ENCODE measurements at regions of chr12 and their contacts with region 1.

Region 1: DNA sequence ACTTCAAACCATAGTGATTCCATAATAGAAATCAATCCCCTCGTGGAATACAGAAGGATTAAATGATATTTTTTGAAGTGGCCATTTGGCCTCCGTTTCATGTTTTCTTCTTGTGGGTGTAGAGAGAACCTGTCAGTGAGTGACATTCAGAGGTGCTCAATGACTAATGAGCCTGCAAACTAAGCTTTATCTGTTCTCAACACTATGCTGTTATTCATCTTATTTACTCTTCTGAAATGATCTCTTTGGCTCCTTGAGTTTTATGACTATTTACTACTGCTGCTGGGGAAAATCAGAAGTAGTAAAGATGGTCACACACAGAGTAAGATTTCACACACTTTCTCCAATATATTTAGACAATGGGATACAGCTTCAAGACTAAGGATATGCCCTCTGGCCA is 30.4 kb downstream of the ATP2B1 start:
- DNase-seq: no peak
- H3K4me3 ChIP-seq: no peak overlapping the region
- H3K4me3 Mint-ChIP-seq: peak overlapping the region in 6 of 8 donors; percentile 3 to 49 (median 22)
- H3K27ac ChIP-seq: no peak overlapping the region
- H3K27ac Mint-ChIP-seq: peak overlapping the region in 5 of 7 donors; percentile 1 to 50 (median 13)
- H3K4me1 ChIP-seq: peaks cover 67% of the 10 kb centered on the region
- H3K4me1 Mint-ChIP-seq: peaks cover 52 to 81% (median 68%) of the 10 kb centered on the region in 4 donors
- H3K27me3 ChIP-seq: no peaks in the 10 kb centered on the region
- H3K27me3 Mint-ChIP-seq: no peaks in the 10 kb centered on the region

Region 2: DNA sequence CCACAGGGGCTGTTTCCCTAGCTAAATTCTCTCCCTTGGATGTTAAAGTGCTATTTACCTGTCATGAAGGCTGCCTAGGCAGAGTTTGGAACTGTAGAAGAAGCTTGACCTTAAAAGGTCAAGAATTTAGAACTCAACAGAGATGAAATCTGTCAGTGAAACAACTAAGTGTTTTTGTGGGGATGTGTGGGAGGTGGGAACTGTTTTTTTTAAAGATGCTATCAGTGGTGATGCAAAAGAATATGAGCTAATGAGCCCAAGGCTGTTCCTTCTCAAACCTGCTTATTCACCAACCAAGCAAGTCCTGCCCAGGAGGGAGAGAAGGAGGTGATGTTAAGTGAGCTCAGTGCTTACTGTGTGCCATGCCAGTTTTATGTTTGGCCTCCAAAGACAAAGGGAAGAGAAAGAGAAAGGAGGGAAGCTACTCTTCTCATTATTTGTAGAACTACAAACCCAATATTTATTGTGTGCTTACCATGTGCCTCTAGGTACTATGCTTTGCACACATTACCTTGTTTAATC is 111.5 kb before region 1 on chr12:
- CTCF ChIA-PET with region 1: no interaction called
- POLR2A ChIA-PET with region 1: no interaction called
- intact Hi-C with region 1: no loop called
- DNase-seq: no peak
- H3K4me3 ChIP-seq: no peak overlapping the region
- H3K4me3 Mint-ChIP-seq: peak overlapping the region in 1 of 8 donors; percentile 7
- H3K27ac ChIP-seq: no peak overlapping the region
- H3K27ac Mint-ChIP-seq: no peak overlapping the region
- H3K4me1 ChIP-seq: no peaks in the 10 kb centered on the region
- H3K4me1 Mint-ChIP-seq: peaks cover 0 to 2% (median 0%) of the 10 kb centered on the region in 4 donors
- H3K27me3 ChIP-seq: no peaks in the 10 kb centered on the region
- H3K27me3 Mint-ChIP-seq: no peaks in the 10 kb centered on the region

Region 3: GRCh38 chr12:89663577-89664357 is 14.5 kb before region 1 on chr12:
- CTCF ChIA-PET with region 1: interaction called, 3 read pairs
- POLR2A ChIA-PET with region 1: interaction called, 4 read pairs
- intact Hi-C with region 1: loop called (anchors 2 kb)
- DNase-seq: peak in 1 of 5 donors; percentile 60
- H3K4me3 ChIP-seq: no peak overlapping the region
- H3K4me3 Mint-ChIP-seq: peak overlapping the region in 6 of 8 donors; percentile 25 to 65 (median 54)
- H3K27ac ChIP-seq: peak overlapping the region; percentile 22
- H3K27ac Mint-ChIP-seq: peak overlapping the region; percentile 11 to 87 (median 69)
- H3K4me1 ChIP-seq: peaks cover 88% of the 10 kb centered on the region
- H3K4me1 Mint-ChIP-seq: peaks cover 60 to 80% (median 72%) of the 10 kb centered on the region in 4 donors
- H3K27me3 ChIP-seq: no peaks in the 10 kb centered on the region
- H3K27me3 Mint-ChIP-seq: no peaks in the 10 kb centered on the region